ENCODE measurements at regions of chr2 and their contacts with region 1.

Region 1: DNA sequence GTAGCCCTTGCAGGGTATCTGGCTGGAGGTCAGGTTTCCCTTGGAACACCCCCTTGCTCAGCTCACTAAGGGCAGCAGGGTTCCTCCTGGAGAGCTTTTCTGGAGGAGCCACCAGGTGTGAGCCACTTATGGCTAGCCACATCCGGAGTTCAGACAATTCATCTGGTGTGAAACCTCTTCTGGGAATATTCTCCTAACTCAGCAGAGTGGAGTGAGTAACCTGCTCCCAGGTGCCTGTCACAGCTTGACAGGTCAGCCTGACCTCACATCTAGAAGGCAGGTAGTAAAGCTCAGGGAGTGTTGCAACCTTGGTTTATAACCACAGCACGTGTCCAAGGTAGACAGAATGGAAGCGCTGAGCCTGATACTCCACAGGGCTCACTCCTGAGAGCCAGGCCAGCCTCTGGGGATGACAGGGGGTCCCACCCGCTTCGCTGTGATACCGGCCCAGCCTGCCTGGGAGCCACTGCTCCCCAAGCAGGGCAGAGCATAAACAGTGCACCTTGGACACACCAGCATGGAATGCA is 62.6 kb upstream of the TGFA start:
- DNase-seq: no peak
- ATAC-seq: no peak

Region 2: DNA sequence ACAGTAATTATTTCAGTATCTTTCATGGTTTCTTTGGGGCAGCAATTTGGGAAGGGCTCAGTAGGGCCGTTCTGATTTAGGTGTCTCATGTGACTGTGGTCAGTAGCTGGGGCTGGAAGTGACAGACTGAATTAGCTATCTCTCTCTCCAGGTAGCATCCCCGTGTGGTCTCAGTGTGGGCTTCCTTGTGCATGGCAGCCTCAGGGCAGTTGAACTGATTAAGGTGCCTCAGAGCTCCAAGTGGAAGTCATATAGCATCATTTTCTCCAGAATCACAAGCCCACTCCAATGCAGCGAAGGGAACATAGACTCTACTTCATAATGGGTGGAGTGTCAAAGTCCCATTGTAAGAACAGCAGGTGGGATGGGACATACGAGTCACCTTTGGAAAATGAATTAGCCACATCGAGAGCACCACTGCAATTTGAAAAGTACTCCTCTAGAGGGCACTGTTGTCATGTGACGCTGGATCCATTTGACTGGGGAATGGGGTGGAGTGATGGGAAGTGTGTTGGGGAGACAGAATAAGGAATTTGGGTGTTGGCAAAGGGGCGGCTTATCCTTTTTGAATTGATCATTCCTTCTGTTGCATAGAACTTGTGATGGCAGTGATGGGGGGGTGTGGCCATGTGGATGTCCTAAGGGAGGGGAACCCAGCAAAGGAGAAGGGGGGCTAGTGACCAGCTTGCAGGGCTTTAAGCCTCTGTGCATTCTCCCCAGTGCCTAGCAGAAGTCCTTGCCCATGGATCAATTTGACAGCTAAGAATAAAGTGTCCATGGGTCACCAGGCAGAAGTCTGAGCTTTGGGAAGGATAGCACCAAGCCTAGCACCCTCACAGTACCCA is 275.1 kb before region 1 on chr2:
- intact Hi-C with region 1: loop called (anchors 1 to 5 kb)
- DNase-seq: no peak
- ATAC-seq: peak; percentile 40 to 53

Region 3: DNA sequence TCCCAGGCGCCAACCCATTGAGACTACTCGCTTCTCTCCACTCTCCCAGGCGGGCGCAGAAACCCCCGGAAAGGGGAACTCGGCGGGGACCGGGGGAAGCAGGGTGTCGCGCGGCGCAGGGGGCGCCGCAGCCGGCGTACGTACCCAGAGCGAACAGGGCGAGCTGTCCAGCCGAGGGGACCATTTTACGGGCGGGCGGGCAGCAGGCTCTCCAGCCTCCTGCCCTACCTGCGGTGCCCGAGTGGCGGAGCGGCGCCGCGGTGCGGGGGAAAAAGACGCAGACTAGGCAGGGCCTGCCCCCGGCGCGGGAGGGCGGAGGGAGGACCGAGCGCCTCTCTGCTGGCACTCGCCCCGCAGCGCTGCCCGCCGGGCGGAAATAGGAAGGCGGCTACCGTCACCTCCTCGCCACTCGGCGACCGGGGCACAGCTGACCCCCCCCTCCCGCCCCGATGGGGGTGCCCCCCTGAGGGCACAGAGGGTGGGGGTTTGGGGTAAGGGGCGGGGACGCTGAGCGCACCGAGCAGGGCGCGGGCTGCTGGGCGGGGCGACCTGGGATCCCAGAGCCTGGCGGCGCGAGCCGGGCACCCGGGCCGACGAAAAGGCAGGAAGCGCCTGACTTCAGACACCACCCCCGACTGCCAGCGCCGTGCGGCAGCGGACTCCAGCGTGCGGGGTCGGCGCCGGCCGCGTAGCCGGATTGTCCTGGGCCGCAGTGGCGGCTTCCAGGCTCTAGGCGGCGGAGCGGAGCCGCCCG is 62.5 kb before region 1 on chr2 and contains the start of gene TGFA:
- intact Hi-C with region 1: loop called in 1 of 2 experiments (anchors 5 kb)
- DNase-seq: peak; percentile 69
- ATAC-seq: peak; percentile 89 to 95
- total RNA-seq, gene TGFA: 1.0 TPM